ENCODE measurements at regions of chr11 and their contacts with region 1.

Region 1: DNA sequence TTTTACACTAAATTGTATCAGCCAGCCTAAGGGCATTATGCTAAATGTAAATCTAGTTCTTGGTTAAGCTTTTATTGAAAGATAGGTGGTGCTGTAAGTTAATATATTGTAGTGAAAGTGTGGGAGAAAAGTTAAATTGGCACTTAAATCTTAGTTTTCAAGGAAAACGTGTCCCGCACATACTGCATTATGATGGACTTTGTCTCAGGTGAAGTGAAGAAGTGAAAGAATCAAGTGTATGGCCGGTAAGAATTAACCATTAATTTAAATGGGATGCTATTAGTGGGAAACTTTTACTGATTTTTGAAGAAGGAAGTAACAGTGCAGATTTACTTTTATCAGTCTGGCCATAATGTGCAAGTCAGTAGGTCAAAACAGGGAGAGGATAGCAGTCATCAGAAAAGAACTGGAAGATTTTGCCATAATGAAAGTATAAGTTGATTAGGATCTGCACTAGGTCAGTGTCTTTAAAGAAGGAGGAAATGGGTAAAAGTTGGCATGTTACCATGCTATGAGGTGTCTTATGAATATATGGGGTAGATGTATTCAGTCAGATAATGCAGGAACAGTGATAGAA is 81.6 kb downstream of the PDHX start:
- DNase-seq: no peak
- H3K4me3 ChIP-seq: no peak overlapping the region
- H3K27ac ChIP-seq: no peak overlapping the region
- H3K4me1 ChIP-seq: peaks cover 0 to 6% (median 3%) of the 10 kb centered on the region in 4 donors
- H3K27me3 ChIP-seq: no peaks in the 10 kb centered on the region
- CTCF ChIP-seq: peak; percentile 35 to 54 (median 48)
- EP300 ChIP-seq: no peak
- POLR2A ChIP-seq: no peak

Region 2: GRCh38 chr11:35237860-35238715 is 240.0 kb after region 1 on chr11:
- intact Hi-C with region 1: loop called (anchors 10 kb)
- DNase-seq: no peak
- H3K4me3 ChIP-seq: no peak overlapping the region
- H3K27ac ChIP-seq: no peak overlapping the region
- H3K4me1 ChIP-seq: peaks cover 0 to 28% (median 12%) of the 10 kb centered on the region in 4 donors
- H3K27me3 ChIP-seq: no peaks in the 10 kb centered on the region
- CTCF ChIP-seq: peak in 3 of 4 experiments; percentile 46 to 60 (median 49)
- EP300 ChIP-seq: no peak
- POLR2A ChIP-seq: no peak

Region 3: DNA sequence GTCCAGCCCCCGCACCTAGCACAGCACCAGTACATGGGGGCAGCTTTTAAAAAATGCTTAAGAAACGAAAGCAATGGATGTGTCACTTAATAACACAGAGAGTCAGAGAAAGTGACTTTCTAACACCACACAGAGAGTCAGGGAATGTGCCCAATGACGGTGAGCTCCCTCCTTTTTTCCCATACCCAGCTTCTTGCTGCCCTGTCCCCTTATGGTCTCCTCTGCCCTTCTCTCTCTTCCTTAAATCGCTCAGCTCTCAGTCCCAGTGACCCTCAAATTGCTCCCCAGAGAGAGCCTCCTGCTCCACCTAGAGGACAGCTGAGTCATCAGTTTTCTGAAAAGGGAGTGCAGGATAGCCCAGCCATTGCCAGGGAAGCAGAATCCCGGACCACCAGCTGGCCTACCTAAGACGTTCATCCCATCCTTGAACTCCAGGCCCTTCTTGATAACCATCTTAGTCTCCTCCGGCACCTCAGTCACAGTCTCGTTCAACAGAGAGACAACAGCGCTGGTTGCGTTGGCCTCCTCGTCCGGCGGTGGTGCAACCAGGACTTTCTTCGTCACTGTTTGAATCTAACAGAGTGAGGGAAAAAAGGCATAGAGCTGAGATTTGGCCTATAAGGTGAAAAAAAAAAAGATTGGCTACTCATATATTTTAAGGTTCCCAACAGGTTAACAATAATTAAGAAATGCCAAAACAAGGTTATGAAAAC is 307.8 kb after region 1 on chr11:
- intact Hi-C with region 1: loop called (anchors 5 kb)
- DNase-seq: no peak
- H3K4me3 ChIP-seq: no peak overlapping the region
- H3K27ac ChIP-seq: no peak overlapping the region
- H3K4me1 ChIP-seq: peaks cover 0 to 23% (median 9%) of the 10 kb centered on the region in 4 donors
- H3K27me3 ChIP-seq: no peaks in the 10 kb centered on the region
- CTCF ChIP-seq: peak; percentile 21 to 45 (median 43)
- EP300 ChIP-seq: no peak
- POLR2A ChIP-seq: no peak

Region 4: GRCh38 chr11:35391922-35392813 is 394.1 kb after region 1 on chr11:
- intact Hi-C with region 1: loop called (anchors 2 kb)
- DNase-seq: peak; percentile 85
- H3K4me3 ChIP-seq: peak overlapping the region in 2 of 4 donors; percentile 15 to 36
- H3K27ac ChIP-seq: no peak overlapping the region
- H3K4me1 ChIP-seq: peaks cover 0 to 17% (median 7%) of the 10 kb centered on the region in 4 donors
- H3K27me3 ChIP-seq: no peaks in the 10 kb centered on the region
- CTCF ChIP-seq: peak; percentile 78 to 91 (median 84)
- EP300 ChIP-seq: peak in 1 of 4 donors; percentile 11
- POLR2A ChIP-seq: no peak